ENCODE measurements at regions of chr9 and their contacts with region 1.

Region 1: DNA sequence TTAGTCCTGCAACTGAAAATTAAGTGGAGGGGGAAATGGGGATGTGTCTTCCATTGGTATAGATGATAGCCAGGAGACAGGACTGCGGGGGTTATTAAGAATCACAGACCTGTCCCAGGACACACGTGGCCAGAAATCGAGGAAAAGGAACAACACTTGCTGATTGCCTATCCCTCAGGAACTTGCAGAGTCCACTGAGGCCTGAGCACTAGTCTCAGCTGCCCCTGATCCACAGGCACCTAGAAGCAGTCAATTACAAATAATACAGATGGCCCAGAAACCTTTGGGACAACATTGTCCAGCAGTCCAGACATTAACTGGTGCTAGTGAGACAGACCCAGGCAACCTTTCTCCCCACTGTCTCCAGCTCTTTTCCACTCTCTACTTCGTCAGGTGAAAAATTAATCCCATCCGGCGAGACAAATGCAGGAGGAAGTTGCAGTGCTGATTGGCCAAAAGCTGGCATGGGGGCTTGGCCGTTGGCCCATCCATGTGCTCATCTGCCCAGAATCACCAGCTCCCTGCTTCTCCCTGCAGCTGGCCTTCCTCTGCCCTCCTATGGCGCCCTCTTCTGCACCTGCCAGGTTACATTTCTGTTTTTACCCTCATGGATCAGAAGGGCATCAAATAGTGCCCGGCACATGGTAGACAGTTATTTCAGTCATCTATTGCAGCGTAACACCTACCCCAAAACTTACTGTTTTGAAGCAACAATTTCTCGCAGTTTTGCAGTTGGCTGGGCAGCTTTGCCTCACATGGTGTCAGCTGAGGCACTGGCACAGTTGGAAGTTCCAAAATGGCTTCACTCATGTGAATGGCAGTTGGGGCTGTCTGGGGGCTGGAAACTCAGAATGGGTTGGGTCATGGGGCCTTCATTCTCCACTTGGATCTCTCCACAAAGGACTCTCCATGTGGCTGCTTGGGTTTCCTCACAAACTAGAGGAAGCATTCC is 3.6 kb upstream of the B4GALT1 start:
- DNase-seq: peak; percentile 69
- ATAC-seq: no peak
- H3K4me3 Mint-ChIP-seq: no peak overlapping the region
- H3K27ac Mint-ChIP-seq: no peak overlapping the region
- H3K4me1 Mint-ChIP-seq: peaks cover 20% of the 10 kb centered on the region
- H3K27me3 Mint-ChIP-seq: no peaks in the 10 kb centered on the region

Region 2: DNA sequence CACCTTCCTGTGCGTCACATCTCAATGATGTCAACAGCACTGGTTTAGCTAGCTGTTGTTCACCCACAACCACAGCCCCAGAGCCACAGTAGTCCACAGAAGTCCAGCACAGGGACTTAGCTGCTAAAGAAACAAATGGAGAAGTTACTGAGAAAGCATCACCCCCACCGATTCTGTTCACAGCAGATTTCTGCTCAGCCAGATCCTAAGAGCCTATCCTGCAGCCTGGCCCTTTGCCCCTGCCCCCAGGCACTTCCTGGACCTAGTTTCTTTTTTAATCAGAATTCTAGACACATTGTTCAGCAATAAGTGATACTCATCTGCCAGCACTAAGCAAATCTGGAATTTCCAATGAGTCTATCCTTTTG is 11.0 kb before region 1 on chr9:
- CTCF ChIA-PET with region 1: interaction called, 13 read pairs
- DNase-seq: peak; percentile 82
- ATAC-seq: peak; percentile 69
- H3K4me3 Mint-ChIP-seq: peak overlapping the region; percentile 55
- H3K27ac Mint-ChIP-seq: peak overlapping the region; percentile 96
- H3K4me1 Mint-ChIP-seq: peaks cover 86% of the 10 kb centered on the region
- H3K27me3 Mint-ChIP-seq: no peaks in the 10 kb centered on the region

Measured in activated CD8-positive, alpha-beta memory T cell treated with anti-CD3 and anti-CD28 coated beads, Interleukin-2, amount 10 ng/mL, durations not matched to agents 7 days and 5 days (primary cell).